Colonic mucosa (tissue), 4 donors: ENCODE measurements at regions of chr2 and their contacts with region 1.

Region 1: GRCh38 chr2:166127217-166128155 is at the start of gene SCN1A:
- DNase-seq: no peak
- H3K4me3 ChIP-seq: no peak within 1 kb of the TSS
- H3K27ac ChIP-seq: no peak within 1 kb of the TSS
- H3K4me1 ChIP-seq: no peaks in the 10 kb centered on the region
- H3K27me3 ChIP-seq: no peaks in the 10 kb centered on the region
- CTCF ChIP-seq: peak; percentile 54
- total RNA-seq, gene SCN1A: 0.05 TPM in 1 of 2 donors, not detected in the other

Region 2: DNA sequence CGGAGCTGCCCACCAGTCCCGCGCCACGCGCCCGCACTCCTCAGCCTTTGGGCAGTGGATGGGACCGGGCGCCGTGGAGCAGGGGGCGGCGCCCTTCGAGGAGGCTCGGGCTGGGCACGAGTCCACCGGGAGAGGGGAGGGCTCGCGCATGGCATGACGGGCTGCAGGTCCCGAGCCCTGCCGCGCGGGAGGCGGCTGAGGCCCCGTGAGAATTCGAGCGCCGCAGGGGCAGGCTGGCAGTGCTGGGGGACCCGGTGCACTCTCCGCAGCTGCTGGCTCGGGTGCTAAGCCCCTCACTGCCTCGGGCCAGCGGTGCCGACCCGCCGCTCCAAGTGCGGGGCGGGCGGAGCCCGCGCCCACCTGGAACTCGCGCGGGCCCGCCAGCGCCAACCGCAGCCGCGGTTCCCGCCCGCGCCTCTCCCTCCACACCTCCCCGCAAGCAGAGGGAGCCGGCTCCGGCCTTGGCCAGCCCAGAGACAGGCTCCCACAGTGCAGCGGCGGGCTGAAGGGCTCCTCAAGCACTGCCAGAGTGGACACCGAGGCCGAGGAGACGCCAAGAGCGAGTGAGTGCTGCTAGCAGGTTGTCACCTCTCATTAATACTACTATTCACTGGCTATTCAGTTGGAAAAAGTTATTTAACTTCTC is 170.3 kb before region 1 on chr2:
- intact Hi-C with region 1: loop called (anchors 5 kb)
- DNase-seq: no peak
- H3K4me3 ChIP-seq: no peak overlapping the region
- H3K27ac ChIP-seq: no peak overlapping the region
- H3K4me1 ChIP-seq: peaks cover 9% of the 10 kb centered on the region
- H3K27me3 ChIP-seq: no peaks in the 10 kb centered on the region
- CTCF ChIP-seq: no peak

Region 3: DNA sequence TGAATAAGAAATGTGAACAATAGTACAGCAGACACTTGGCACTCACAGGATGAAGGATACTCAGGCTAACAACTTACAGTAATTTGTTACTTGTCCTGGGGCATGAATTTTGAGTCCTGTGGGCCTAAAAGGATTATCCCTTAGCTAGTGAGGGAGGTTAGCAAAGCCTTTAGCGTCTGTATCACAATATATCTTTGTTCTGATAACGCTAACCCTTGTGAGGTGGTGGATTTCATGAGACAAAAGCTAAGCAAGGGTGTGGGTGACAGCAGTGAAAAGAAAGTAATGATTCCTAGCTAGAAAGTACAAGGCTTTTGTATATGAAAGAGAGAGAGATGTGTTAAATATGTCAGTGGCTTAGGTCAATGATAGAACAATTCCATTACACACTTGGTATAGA is 127.1 kb before region 1 on chr2:
- intact Hi-C with region 1: no loop called
- DNase-seq: no peak
- H3K4me3 ChIP-seq: no peak overlapping the region
- H3K27ac ChIP-seq: no peak overlapping the region
- H3K4me1 ChIP-seq: no peaks in the 10 kb centered on the region
- H3K27me3 ChIP-seq: no peaks in the 10 kb centered on the region
- CTCF ChIP-seq: no peak

Region 4: DNA sequence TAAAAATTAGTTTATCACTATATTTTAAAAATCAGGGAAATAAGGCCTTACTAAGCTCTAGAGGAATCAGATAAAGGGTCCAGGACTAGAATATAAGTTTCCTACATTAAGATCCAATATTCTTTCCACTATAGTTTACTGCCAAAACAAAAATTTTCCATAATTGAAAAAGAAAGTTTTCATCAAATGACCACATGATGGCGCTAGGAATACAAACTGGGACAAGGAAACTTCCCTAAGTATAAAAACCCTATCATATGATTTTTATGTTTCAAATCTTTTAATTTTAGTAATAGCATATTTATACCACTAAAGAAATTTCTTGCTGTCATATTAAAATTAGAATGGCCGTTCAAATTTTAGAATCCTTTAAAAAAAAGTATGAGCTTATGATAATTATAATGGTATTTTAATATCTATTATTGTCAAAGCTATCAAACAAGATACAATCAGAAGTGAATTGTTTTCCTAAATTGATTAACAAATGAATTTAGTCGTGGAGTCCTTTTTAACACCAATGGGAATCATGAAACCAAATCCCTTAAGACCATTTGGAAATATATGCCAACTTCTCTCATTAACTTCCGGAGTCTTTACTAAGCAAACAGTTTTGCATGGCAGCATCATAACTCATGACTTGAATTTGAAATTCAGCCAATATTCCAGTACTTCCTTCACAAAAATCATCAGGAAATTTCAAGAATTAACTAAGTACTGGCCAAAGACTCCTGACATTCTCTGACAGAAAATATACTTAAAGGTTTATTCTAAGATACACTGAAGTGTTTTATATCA is 69.9 kb before region 1 on chr2:
- intact Hi-C with region 1: loop called (anchors 5 kb)
- DNase-seq: no peak
- H3K4me3 ChIP-seq: no peak overlapping the region
- H3K27ac ChIP-seq: no peak overlapping the region
- H3K4me1 ChIP-seq: no peaks in the 10 kb centered on the region
- H3K27me3 ChIP-seq: no peaks in the 10 kb centered on the region
- CTCF ChIP-seq: peak; percentile 19